Left colon (tissue), 2 donors: ENCODE measurements at regions of chr2 and their contacts with region 1.

Region 1: GRCh38 chr2:48479915-48480314 is 50.0 kb upstream of the STON1 start:
- DNase-seq: no peak
- ATAC-seq: peak; percentile 28

Region 2: GRCh38 chr2:48529676-48530032 is 49.7 kb after region 1 on chr2:
- intact Hi-C with region 1: loop called in 1 of 2 experiments (anchors 5 kb)
- DNase-seq: no peak
- ATAC-seq: peak; percentile 3